H1 (cell line): ENCODE measurements at regions of chr9 and their contacts with region 1.

Region 1: DNA sequence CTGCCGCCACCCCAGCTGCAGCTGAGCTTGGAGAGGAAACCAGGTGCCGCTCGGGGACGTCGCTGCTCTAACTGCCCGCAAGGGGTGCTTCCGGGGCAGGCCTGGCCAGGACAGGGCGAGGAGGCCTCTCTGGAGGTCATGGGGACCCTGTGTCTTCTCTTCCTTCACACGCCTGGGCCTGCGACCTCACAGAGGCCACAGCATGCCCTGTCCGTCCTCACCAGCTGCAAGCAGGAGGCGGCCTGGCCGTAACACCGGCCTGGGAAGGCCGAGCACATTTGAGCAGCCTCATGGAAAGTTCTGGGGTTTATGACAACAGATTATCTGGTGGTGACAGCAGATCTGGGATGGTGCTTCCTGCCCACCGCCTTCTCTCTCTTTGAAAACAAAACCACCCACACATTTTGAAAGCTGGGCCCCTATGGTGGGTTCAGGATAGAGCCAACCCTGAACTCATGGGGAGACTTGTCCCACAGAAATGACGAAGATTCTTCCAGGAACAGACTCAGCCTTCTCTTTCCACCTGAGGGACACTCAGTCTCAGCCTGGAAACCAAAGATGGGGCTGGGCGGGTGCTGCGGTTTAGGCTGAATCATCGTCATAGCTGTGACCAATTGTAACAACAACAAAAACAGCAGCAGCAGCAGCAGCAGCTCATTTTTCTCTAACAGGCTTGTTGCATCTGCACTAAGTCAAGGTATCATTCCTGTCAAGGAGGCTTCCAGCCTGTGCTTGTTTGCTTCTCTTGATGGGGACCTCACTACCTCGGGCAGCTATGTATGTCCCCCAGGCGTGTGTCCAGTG is 99.6 kb upstream of the RAPGEF1 start:
- DNase-seq: no peak
- H3K4me3 ChIP-seq: no peak overlapping the region
- H3K27ac ChIP-seq: no peak overlapping the region
- H3K4me1 ChIP-seq: peaks cover 0 to 3% (median 0%) of the 10 kb centered on the region in 4 experiments; a peak in 2 of 7 replicates
- H3K27me3 ChIP-seq: no peaks in the 10 kb centered on the region
- CTCF ChIP-seq: no peak
- EP300 ChIP-seq: no peak
- POLR2A ChIP-seq: no peak
- RAD21 ChIP-seq: no peak

Region 2: DNA sequence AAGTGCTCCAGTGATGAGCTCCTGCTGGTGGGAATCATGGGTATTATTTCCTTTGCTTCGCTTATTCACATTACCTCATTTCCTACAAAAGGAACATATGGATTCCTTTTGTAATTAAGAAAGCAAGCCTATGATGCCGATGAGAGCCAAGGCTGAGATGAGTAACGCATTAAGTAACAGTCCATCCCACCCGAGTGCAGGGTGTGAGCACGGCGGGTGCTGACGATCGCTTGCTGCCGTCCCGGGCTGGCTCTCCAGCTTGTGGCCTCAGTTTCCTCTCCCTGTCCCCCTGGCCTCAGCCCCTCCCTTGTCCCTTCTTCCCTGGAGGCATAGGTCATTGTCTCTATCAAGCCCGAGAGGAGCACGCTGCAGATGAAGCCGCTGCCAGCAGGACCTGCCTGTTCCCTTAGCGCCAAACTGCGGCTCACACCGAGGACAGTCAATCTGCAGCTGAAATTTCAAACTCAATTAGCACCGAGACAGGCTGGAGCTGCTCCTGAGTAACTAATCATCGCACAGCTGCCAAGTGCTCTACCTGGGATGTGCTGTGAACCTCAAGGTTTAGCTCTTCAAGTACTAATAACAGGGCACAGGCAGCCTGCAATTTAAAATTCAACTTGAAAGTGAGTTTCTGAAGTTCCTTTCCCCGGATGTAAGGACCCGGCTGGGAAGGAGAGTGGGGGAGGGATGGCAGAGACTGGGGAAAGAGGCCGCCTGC is 15.6 kb after region 1 on chr9:
- CTCF ChIA-PET with region 1: interaction called, 20 read pairs
- POLR2A ChIA-PET with region 1: interaction called, 4 read pairs
- DNase-seq: no peak
- H3K4me3 ChIP-seq: no peak overlapping the region
- H3K27ac ChIP-seq: no peak overlapping the region
- H3K4me1 ChIP-seq: peaks cover 0 to 10% (median 7%) of the 10 kb centered on the region in 4 experiments; a peak in 3 of 7 replicates
- H3K27me3 ChIP-seq: no peaks in the 10 kb centered on the region
- CTCF ChIP-seq: no peak
- EP300 ChIP-seq: no peak
- POLR2A ChIP-seq: no peak
- RAD21 ChIP-seq: no peak

Region 3: GRCh38 chr9:131981116-131981776 is 141.8 kb after region 1 on chr9:
- CTCF ChIA-PET with region 1: no interaction called
- POLR2A ChIA-PET with region 1: no interaction called
- DNase-seq: no peak
- H3K4me3 ChIP-seq: no peak overlapping the region
- H3K27ac ChIP-seq: no peak overlapping the region
- H3K4me1 ChIP-seq: no peaks in the 10 kb centered on the region
- H3K27me3 ChIP-seq: no peaks in the 10 kb centered on the region
- CTCF ChIP-seq: peak in 2 of 3 experiments; percentile 9 to 30; a peak in 2 of 4 replicates
- EP300 ChIP-seq: no peak
- POLR2A ChIP-seq: no peak
- RAD21 ChIP-seq: peak; percentile 34 to 53